IMR-90 (cell line): ENCODE measurements at regions of chr11 and their contacts with region 1.

Region 1: DNA sequence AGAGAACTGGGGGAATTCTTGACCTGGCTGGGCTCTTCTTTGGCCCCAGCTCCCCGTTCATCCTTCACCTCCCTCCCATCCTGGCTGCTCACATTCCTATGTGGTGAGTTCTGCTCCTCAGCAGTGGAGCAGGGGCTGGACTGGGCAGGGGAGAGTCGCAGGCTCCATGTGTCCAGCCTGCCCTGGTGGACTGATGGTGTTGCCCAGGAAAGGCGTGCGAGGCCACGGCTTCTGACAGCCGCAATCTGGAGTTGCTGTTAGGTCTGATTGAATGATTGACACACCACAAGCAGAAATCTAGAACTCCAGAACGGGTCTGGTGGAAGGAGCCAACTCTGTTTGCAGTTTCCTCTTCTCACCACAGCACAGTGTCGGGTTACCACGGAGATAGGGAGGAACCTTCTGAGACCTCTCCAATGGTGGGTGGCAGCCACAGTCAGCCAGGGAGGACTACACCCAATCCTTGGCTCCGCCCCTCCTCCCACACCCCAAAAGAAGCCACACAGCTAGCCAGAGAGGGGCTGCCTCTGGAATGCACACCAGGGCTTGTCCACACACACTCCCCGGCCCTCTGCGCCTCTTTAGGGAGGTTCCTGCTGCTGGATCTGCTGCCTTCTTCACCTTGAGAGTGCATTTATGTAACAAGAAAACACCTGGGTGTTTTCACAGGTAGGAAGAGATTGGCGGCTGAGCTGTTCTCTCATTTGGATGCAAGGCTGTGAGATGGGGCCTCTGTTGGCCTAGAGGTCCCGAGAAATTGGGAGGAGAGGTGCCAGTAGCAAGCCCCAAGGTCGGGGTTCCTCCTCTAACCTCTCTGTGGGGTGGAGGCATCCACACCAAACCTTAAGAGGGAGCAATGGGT is 56.4 kb upstream of the CD44 start:
- DNase-seq: peak; percentile 83
- ATAC-seq: peak; percentile 91
- H3K4me3 ChIP-seq: no peak overlapping the region
- H3K27ac ChIP-seq: peak overlapping the region; percentile 60
- H3K4me1 ChIP-seq: peaks cover 21% of the 10 kb centered on the region
- H3K27me3 ChIP-seq: no peaks in the 10 kb centered on the region
- CTCF ChIP-seq: no peak
- POLR2A ChIP-seq: peak; percentile 32; the same call in 1 of the 2 replicates
- RAD21 ChIP-seq: peak; percentile 19; the same call in 1 of the 2 replicates

Region 2: DNA sequence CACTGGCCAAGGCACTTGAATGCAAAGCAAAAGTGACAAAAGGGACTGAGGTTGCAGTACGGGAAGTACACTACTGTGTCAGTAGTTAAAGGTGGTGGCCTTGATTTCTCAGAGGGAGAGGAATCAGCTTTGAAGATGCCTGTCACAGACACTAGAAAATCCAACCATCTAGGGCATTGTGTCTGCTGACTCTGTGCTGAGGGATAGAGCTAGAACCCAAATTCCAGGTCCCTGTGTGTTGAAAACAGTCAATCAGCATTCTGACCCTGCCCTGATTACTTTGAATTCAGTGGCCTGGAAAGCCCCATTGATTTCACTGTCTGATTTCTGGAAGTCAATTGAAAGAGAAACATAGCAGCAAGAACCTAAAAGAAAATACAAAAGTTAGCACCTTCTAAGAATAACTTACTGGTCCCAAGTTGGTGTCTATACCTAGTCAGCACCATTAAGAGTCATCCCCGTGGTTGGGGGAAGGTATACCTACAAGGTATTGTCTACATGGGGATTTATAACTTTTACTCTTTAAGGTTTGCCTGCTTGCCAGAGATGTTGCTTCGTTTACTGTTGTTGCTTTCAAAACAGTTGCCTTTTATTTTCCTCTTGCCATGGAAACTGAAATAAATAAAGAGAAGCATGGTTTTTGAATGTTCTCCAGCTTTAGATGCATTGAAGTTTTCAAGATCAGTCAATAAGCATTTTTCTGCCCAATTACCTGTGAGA is 68.9 kb before region 1 on chr11:
- CTCF ChIA-PET with region 1: interaction called, 3 read pairs
- POLR2A ChIA-PET with region 1: no interaction called
- dilution Hi-C with region 1: no loop called
- in situ Hi-C with region 1: no loop called
- intact Hi-C with region 1: loop called (anchors 5 kb)
- DNase-seq: no peak
- ATAC-seq: no peak
- H3K4me3 ChIP-seq: no peak overlapping the region
- H3K27ac ChIP-seq: peak overlapping the region; percentile 22; the same call in 1 of the 2 replicates
- H3K4me1 ChIP-seq: peaks cover 34% of the 10 kb centered on the region
- H3K27me3 ChIP-seq: no peaks in the 10 kb centered on the region
- CTCF ChIP-seq: no peak
- POLR2A ChIP-seq: no peak
- RAD21 ChIP-seq: no peak

Region 3: DNA sequence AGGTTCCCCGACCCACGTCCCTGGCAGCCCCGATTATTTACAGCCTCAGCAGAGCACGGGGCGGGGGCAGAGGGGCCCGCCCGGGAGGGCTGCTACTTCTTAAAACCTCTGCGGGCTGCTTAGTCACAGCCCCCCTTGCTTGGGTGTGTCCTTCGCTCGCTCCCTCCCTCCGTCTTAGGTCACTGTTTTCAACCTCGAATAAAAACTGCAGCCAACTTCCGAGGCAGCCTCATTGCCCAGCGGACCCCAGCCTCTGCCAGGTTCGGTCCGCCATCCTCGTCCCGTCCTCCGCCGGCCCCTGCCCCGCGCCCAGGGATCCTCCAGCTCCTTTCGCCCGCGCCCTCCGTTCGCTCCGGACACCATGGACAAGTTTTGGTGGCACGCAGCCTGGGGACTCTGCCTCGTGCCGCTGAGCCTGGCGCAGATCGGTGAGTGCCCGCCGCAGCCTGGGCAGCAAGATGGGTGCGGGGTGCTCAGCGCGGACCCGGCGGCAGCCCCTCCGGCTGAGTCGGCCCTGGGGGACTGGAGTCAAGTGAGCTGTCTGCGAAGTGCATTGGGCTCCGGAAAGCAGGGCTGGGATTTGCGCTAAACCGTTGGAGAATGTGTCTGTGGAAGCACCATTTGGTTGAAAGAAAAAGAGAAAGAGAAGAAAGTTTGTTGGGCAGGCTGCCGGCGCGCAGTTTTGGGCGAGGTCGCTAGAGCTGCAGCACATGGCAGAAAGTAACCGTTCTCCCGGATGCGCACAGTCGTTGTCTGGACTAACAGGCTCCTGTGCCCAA is 56.6 kb after region 1 on chr11 and contains the start of gene CD44:
- CTCF ChIA-PET with region 1: no interaction called
- POLR2A ChIA-PET with region 1: no interaction called
- dilution Hi-C with region 1: no loop called
- in situ Hi-C with region 1: no loop called
- intact Hi-C with region 1: loop called (anchors 2 kb)
- DNase-seq: peak; percentile 86
- ATAC-seq: peak; percentile 68
- H3K4me3 ChIP-seq: peak within 1 kb of the TSS; percentile 74
- H3K27ac ChIP-seq: peak within 1 kb of the TSS; percentile 97
- H3K4me1 ChIP-seq: peaks cover 21% of the 10 kb centered on the region
- H3K27me3 ChIP-seq: no peaks in the 10 kb centered on the region
- CTCF ChIP-seq: no peak
- POLR2A ChIP-seq: peak; percentile 98
- RAD21 ChIP-seq: no peak
- total RNA-seq, gene CD44: 341 and 357 TPM in 2 replicates